ENCODE measurements at regions of chr17 and their contacts with region 1.

Region 1: GRCh38 chr17:2244545-2245525 is 58.8 kb downstream of the SMG6 start:
- DNase-seq: peak; percentile 93
- H3K4me3 Mint-ChIP-seq: no peak overlapping the region
- H3K27ac Mint-ChIP-seq: peak overlapping the region; percentile 53
- H3K4me1 Mint-ChIP-seq: peaks cover 37% of the 10 kb centered on the region
- H3K27me3 Mint-ChIP-seq: no peaks in the 10 kb centered on the region

Region 2: DNA sequence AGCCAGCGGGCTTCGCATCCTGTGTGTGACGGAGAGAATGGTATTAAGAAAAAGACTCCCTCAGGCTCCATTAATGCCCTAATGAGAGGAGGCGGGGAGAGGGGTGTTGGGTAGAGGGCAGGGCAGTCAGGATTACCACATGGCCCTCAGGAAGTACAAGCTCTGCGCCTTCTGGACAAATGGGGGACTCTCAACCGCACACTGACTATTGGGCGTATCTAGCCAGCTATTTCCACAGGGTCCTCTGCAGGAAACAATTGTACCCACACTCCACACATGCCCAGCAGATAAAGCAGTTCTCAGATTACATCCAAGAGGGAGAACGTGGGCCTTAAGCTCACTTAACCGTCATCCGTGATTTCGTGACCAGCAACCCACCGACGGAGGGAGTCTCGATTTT is 1280.0 kb before region 1 on chr17:
- CTCF ChIA-PET with region 1: no interaction called
- intact Hi-C with region 1: no loop called
- DNase-seq: no peak
- H3K4me3 Mint-ChIP-seq: no peak overlapping the region
- H3K27ac Mint-ChIP-seq: no peak overlapping the region
- H3K4me1 Mint-ChIP-seq: no peaks in the 10 kb centered on the region
- H3K27me3 Mint-ChIP-seq: peaks cover 24% of the 10 kb centered on the region

Region 3: DNA sequence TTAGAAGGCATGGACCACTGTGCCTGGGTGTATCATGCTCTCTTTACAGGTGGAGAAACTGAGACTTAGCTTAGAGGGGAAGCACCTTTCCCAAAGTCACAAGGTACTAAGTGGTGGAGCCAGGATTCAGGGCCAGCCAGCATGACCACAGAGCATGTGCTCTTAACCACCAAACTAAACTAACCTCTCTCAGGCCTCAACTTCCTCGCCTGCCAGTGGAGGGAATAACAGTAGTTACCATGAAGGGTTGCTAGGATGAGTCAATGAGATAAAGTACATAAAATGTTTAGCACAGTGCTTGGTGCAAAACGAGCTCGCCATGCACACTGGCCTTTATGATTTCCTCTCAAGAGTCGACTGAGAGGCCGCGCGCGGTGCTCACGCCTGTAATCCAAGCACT is 746.0 kb before region 1 on chr17:
- CTCF ChIA-PET with region 1: no interaction called
- intact Hi-C with region 1: no loop called
- DNase-seq: no peak
- H3K4me3 Mint-ChIP-seq: no peak overlapping the region
- H3K27ac Mint-ChIP-seq: no peak overlapping the region
- H3K4me1 Mint-ChIP-seq: no peaks in the 10 kb centered on the region
- H3K27me3 Mint-ChIP-seq: no peaks in the 10 kb centered on the region

Region 4: GRCh38 chr17:2064980-2065785 is 179.7 kb before region 1 on chr17:
- CTCF ChIA-PET with region 1: interaction called, 40 read pairs
- intact Hi-C with region 1: loop called (anchors 1 kb)
- DNase-seq: peak; percentile 80
- H3K4me3 Mint-ChIP-seq: no peak overlapping the region
- H3K27ac Mint-ChIP-seq: no peak overlapping the region
- H3K4me1 Mint-ChIP-seq: peaks cover 18% of the 10 kb centered on the region
- H3K27me3 Mint-ChIP-seq: peaks cover 2% of the 10 kb centered on the region

Region 5: GRCh38 chr17:2090804-2091534 is 153.9 kb before region 1 on chr17:
- CTCF ChIA-PET with region 1: interaction called, 19 read pairs
- intact Hi-C with region 1: no loop called
- DNase-seq: no peak
- H3K4me3 Mint-ChIP-seq: no peak overlapping the region
- H3K27ac Mint-ChIP-seq: peak overlapping the region; percentile 57
- H3K4me1 Mint-ChIP-seq: peaks cover 55% of the 10 kb centered on the region
- H3K27me3 Mint-ChIP-seq: no peaks in the 10 kb centered on the region

Region 6: GRCh38 chr17:2192367-2193057 is 52.3 kb before region 1 on chr17:
- CTCF ChIA-PET with region 1: interaction called, 6 read pairs
- intact Hi-C with region 1: loop called (anchors 10 kb)
- DNase-seq: peak; percentile 69
- H3K4me3 Mint-ChIP-seq: no peak overlapping the region
- H3K27ac Mint-ChIP-seq: peak overlapping the region; percentile 59
- H3K4me1 Mint-ChIP-seq: peaks cover 54% of the 10 kb centered on the region
- H3K27me3 Mint-ChIP-seq: no peaks in the 10 kb centered on the region

Region 7: GRCh38 chr17:2222901-2223616 is 21.8 kb before region 1 on chr17:
- CTCF ChIA-PET with region 1: interaction called, 19 read pairs
- intact Hi-C with region 1: loop called (anchors 5 kb)
- DNase-seq: peak; percentile 75
- H3K4me3 Mint-ChIP-seq: peak overlapping the region; percentile 46
- H3K27ac Mint-ChIP-seq: peak overlapping the region; percentile 79
- H3K4me1 Mint-ChIP-seq: peaks cover 42% of the 10 kb centered on the region
- H3K27me3 Mint-ChIP-seq: no peaks in the 10 kb centered on the region

Region 8: DNA sequence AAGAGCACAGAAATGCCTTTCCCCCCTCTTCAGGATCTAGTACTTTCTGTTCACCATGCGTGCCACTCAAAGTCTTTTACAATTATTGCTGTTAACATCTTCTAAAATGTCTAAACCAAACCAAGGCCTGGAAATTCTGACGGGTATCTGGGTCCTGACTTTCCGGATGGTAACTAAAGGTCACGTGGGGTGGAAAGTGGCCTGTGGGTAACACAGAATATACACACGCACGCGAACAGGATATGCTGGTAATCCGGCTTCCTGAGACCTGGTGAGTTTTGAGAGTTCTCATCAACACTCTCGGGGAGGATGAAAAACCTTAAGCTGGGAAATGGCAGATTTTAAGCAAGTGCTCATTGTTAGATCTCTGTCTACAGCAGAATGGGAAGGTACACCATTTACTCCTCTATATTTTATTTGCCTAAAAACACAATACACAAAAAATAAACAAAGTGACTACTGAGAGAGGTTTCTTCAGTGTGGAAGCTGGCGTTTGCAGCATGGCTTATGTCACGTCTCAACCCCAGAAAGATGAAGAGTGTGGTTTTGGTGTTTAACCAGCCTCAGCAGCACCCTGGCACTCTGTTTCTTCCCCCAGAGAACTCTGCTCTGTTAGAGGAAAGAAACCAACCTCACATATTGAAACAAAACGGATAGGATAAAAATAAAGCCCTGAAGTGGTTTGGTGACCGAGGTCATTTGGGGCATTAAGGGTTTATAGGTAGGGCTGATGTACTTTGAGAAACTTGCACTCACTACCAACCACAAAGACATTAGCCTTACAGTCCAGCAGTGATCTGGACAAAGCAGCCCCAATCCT is 21.4 kb after region 1 on chr17:
- CTCF ChIA-PET with region 1: interaction called, 38 read pairs
- intact Hi-C with region 1: no loop called
- DNase-seq: peak; percentile 94
- H3K4me3 Mint-ChIP-seq: peak overlapping the region; percentile 76
- H3K27ac Mint-ChIP-seq: peak overlapping the region; percentile 100
- H3K4me1 Mint-ChIP-seq: peaks cover 88% of the 10 kb centered on the region
- H3K27me3 Mint-ChIP-seq: no peaks in the 10 kb centered on the region